Activated CD4-positive, alpha-beta memory T cell treated with anti-CD3 and anti-CD28 coated beads for 36 hours (primary cell): ENCODE measurements at regions of chr11 and their contacts with region 1.

Region 1: GRCh38 chr11:65961232-65961901 is at the start of gene SART1:
- DNase-seq: peak; percentile 98
- H3K4me3 Mint-ChIP-seq: peak within 1 kb of the TSS; percentile 95
- H3K27ac Mint-ChIP-seq: peak within 1 kb of the TSS; percentile 94
- H3K4me1 Mint-ChIP-seq: peaks cover 43% of the 10 kb centered on the region
- H3K27me3 Mint-ChIP-seq: no peaks in the 10 kb centered on the region
- total RNA-seq, gene SART1: 59.1 to 60.5 TPM

Region 2: GRCh38 chr11:65927904-65928397 is 33.4 kb before region 1 on chr11:
- CTCF ChIA-PET with region 1: no interaction called
- POLR2A ChIA-PET with region 1: interaction called, 4 read pairs
- intact Hi-C with region 1: loop called (anchors 2 kb)
- DNase-seq: peak; percentile 89
- H3K4me3 Mint-ChIP-seq: peak overlapping the region; percentile 67
- H3K27ac Mint-ChIP-seq: peak overlapping the region; percentile 96
- H3K4me1 Mint-ChIP-seq: peaks cover 26% of the 10 kb centered on the region
- H3K27me3 Mint-ChIP-seq: no peaks in the 10 kb centered on the region